CD4-positive, alpha-beta T cell (primary cell): ENCODE measurements at regions of chr10 and their contacts with region 1.

Region 1: GRCh38 chr10:75187961-75188426 is 22.6 kb upstream of the VDAC2 start:
- DNase-seq: peak; percentile 55 to 89 (median 64)
- ATAC-seq: peak; percentile 97
- H3K4me3 ChIP-seq: no peak overlapping the region
- H3K4me3 Mint-ChIP-seq: no peak overlapping the region
- H3K27ac ChIP-seq: peak overlapping the region in 1 of 2 donors; percentile 47
- H3K27ac Mint-ChIP-seq: peak overlapping the region; percentile 95
- H3K4me1 ChIP-seq: peaks cover 7% of the 10 kb centered on the region
- H3K4me1 Mint-ChIP-seq: peaks cover 8% of the 10 kb centered on the region
- H3K27me3 ChIP-seq: no peaks in the 10 kb centered on the region
- H3K27me3 Mint-ChIP-seq: no peaks in the 10 kb centered on the region
- CTCF ChIP-seq: peak; percentile 81

Region 2: GRCh38 chr10:75111367-75111906 is 76.6 kb before region 1 on chr10 and contains the start of gene SAMD8:
- CTCF ChIA-PET with region 1: interaction called, 3 read pairs
- POLR2A ChIA-PET with region 1: interaction called, 3 read pairs
- intact Hi-C with region 1: loop called in 1 of 2 experiments (anchors 5 kb)
- DNase-seq: peak; percentile 90 to 99 (median 94)
- ATAC-seq: peak; percentile 80
- H3K4me3 ChIP-seq: peak within 1 kb of the TSS; percentile 97
- H3K4me3 Mint-ChIP-seq: peak within 1 kb of the TSS; percentile 88
- H3K27ac ChIP-seq: peak within 1 kb of the TSS; percentile 92 to 95
- H3K27ac Mint-ChIP-seq: peak within 1 kb of the TSS; percentile 90
- H3K4me1 ChIP-seq: peaks cover 26% of the 10 kb centered on the region
- H3K4me1 Mint-ChIP-seq: peaks cover 62% of the 10 kb centered on the region
- H3K27me3 ChIP-seq: no peaks in the 10 kb centered on the region
- H3K27me3 Mint-ChIP-seq: no peaks in the 10 kb centered on the region
- CTCF ChIP-seq: no peak
- total RNA-seq, gene SAMD8: 34.1 to 37.4 TPM

Region 3: DNA sequence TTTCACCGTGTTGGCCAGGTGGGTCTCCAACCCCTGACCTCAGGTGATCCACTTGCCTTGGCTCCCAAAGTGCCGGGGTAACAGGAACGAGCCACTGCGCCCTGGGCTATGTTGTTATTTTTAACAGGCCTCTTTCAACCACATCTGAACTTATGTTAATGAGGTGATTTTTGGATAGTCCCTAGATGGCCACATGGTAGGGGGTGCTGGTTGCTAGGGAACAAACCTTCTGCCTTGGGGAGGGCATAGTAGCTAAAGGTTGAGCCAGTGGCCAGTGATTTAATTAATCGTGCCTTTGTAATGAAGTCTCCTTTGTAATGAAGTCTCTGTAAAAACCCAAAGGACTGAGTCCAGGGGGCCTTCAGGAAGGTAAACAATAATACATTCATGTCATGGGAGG is 38.7 kb after region 1 on chr10:
- CTCF ChIA-PET with region 1: interaction called, 39 read pairs
- POLR2A ChIA-PET with region 1: interaction called, 71 read pairs
- intact Hi-C with region 1: loop called (anchors 1 kb)
- DNase-seq: no peak
- ATAC-seq: no peak
- H3K4me3 ChIP-seq: no peak overlapping the region
- H3K4me3 Mint-ChIP-seq: no peak overlapping the region
- H3K27ac ChIP-seq: peak overlapping the region in 1 of 2 donors; percentile 32
- H3K27ac Mint-ChIP-seq: peak overlapping the region; percentile 53
- H3K4me1 ChIP-seq: peaks cover 19% of the 10 kb centered on the region
- H3K4me1 Mint-ChIP-seq: peaks cover 66% of the 10 kb centered on the region
- H3K27me3 ChIP-seq: no peaks in the 10 kb centered on the region
- H3K27me3 Mint-ChIP-seq: no peaks in the 10 kb centered on the region
- CTCF ChIP-seq: no peak

Region 4: DNA sequence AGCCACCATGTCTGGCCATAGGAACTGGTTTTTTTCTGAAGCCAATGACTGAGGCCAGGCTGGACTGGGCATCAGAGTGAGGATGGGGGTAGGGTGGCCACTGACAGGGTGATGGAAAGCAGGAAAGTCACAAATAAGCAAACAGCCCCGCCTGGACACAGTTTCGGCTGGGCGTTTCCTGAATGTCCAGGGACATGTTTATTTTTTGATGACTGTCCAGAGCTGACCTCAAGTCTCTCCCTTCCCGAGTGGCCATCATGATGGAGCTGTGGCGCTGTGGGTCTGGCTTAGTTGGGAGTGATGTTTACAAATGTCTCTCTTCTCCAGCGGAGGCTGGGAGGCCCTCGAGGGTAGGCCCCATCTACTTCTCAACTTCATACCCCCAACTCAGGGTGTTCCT is 84.9 kb after region 1 on chr10:
- CTCF ChIA-PET with region 1: no interaction called
- POLR2A ChIA-PET with region 1: no interaction called
- intact Hi-C with region 1: no loop called
- DNase-seq: no peak
- ATAC-seq: no peak
- H3K4me3 ChIP-seq: no peak overlapping the region
- H3K4me3 Mint-ChIP-seq: no peak overlapping the region
- H3K27ac ChIP-seq: no peak overlapping the region
- H3K27ac Mint-ChIP-seq: no peak overlapping the region
- H3K4me1 ChIP-seq: no peaks in the 10 kb centered on the region
- H3K4me1 Mint-ChIP-seq: no peaks in the 10 kb centered on the region
- H3K27me3 ChIP-seq: peaks cover 0 to 8% of the 10 kb centered on the region in 2 experiments
- H3K27me3 Mint-ChIP-seq: peaks cover 4% of the 10 kb centered on the region
- CTCF ChIP-seq: no peak

Region 5: GRCh38 chr10:75982611-75983369 is 794.8 kb after region 1 on chr10:
- CTCF ChIA-PET with region 1: no interaction called
- POLR2A ChIA-PET with region 1: no interaction called
- intact Hi-C with region 1: no loop called
- DNase-seq: no peak
- ATAC-seq: no peak
- H3K4me3 ChIP-seq: no peak overlapping the region
- H3K4me3 Mint-ChIP-seq: no peak overlapping the region
- H3K27ac ChIP-seq: no peak overlapping the region
- H3K27ac Mint-ChIP-seq: no peak overlapping the region
- H3K4me1 ChIP-seq: no peaks in the 10 kb centered on the region
- H3K4me1 Mint-ChIP-seq: no peaks in the 10 kb centered on the region
- H3K27me3 ChIP-seq: no peaks in the 10 kb centered on the region
- H3K27me3 Mint-ChIP-seq: peaks cover 12% of the 10 kb centered on the region
- CTCF ChIP-seq: no peak